ENCODE measurements at regions of chr1 and their contacts with region 1.

Region 1: GRCh38 chr1:174262349-174263241 is 103.3 kb downstream of the RABGAP1L start:
- DNase-seq: no peak
- H3K4me3 ChIP-seq: no peak overlapping the region
- H3K27ac ChIP-seq: no peak overlapping the region
- H3K4me1 ChIP-seq: peaks cover 0 to 8% (median 2%) of the 10 kb centered on the region in 4 donors
- H3K27me3 ChIP-seq: no peaks in the 10 kb centered on the region
- CTCF ChIP-seq: peak; percentile 52 to 66 (median 61)
- EP300 ChIP-seq: no peak
- POLR2A ChIP-seq: no peak

Region 2: DNA sequence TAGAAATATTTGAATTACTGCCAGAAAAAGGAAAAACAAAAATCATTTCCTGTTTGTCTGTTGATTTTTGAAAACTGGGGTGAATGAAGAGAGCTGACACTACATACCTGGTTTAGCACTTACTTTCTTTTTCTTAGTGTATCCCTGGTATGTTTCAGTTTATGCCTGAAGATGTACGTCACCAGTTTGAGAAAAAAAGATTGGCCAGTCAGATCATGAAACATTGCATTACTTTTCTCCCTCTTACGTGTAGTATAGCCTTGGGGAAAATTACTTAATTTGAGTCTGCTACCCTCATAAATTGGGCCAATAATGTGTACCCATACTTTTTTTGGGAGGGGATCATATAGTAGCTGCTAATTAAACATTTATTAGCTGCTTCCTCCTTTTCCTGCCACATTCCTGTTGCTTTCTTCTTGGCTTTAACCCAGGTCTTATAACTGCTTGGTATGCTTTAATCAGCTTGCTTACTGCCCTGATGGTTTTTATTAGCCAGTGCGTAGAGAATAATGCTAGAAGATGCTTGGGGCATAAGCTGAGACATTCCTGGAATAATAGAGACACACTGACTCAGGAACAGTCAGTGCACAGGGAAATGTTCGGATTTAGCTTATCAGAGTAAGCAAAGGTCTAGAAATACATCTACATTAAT is 71.2 kb before region 1 on chr1:
- in situ Hi-C with region 1: no loop called
- intact Hi-C with region 1: no loop called
- DNase-seq: no peak
- H3K4me3 ChIP-seq: no peak overlapping the region
- H3K27ac ChIP-seq: no peak overlapping the region
- H3K4me1 ChIP-seq: peaks cover 0 to 4% (median 0%) of the 10 kb centered on the region in 4 donors
- H3K27me3 ChIP-seq: no peaks in the 10 kb centered on the region
- CTCF ChIP-seq: no peak
- EP300 ChIP-seq: no peak
- POLR2A ChIP-seq: no peak

Region 3: DNA sequence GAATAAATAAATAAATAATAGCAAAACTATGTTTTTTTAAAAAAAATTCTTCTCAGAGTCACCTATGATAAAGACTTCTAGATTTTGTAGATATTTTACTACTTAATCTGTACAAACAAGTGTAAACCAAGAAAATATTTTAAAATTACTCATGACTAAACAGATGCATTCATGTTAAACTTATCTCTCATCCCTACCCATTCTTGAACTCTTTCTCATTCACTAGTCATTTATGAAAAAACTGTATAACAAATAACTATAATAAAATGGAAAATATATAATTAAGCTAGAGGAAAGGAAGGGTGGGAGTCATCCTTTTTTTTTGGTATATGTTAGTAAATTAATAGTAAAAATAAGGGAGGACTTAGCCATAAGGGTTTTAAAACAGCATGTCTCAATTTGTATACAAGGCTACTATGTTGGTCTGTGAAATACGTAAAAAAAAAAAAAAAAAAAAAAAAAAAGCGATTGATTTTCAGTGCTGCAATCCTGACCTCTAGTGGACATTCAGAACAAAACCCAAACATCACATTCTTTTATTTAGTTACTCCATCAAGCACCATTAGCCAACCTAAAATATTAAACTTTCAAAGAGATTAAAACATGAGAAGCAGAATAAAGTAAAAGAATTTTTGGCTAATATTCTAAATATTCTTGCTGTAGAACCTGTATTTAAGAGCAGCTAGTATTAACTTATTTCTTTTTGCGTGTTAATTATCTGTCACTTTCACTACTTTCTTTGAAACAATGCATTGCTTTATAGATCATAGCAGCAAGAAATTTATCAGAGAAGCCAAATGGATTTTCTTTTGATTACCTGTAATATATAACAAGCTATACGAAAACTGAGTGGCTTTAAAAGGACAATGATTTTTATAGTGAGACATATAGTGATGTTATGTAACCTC is 481.3 kb after region 1 on chr1:
- in situ Hi-C with region 1: loop called (anchors 5 to 10 kb)
- intact Hi-C with region 1: no loop called
- DNase-seq: no peak
- H3K4me3 ChIP-seq: no peak overlapping the region
- H3K27ac ChIP-seq: no peak overlapping the region
- H3K4me1 ChIP-seq: peaks cover 0 to 6% (median 5%) of the 10 kb centered on the region in 4 donors
- H3K27me3 ChIP-seq: no peaks in the 10 kb centered on the region
- CTCF ChIP-seq: peak; percentile 56 to 68 (median 62)
- EP300 ChIP-seq: no peak
- POLR2A ChIP-seq: no peak

Region 4: GRCh38 chr1:174999216-174999925 is 736.8 kb after region 1 on chr1:
- in situ Hi-C with region 1: loop called in 1 of 4 experiments (anchors 25 kb)
- intact Hi-C with region 1: no loop called
- DNase-seq: peak; percentile 98
- H3K4me3 ChIP-seq: peak overlapping the region; percentile 36 to 86 (median 80)
- H3K27ac ChIP-seq: peak overlapping the region; percentile 90 to 99 (median 98)
- H3K4me1 ChIP-seq: peaks cover 12 to 57% (median 23%) of the 10 kb centered on the region in 4 donors
- H3K27me3 ChIP-seq: no peaks in the 10 kb centered on the region
- CTCF ChIP-seq: no peak
- EP300 ChIP-seq: no peak
- POLR2A ChIP-seq: peak; percentile 96